Activated CD4-positive, alpha-beta T cell treated with anti-CD3 and anti-CD28 coated beads, Interleukin-2, amount 10 ng/mL, durations not matched to agents 24 days and 14 days (primary cell): ENCODE measurements at regions of chr2 and their contacts with region 1.

Region 1: GRCh38 chr2:151261231-151261976 is at the start of gene RBM43:
- DNase-seq: peak; percentile 97
- H3K4me3 Mint-ChIP-seq: peak within 1 kb of the TSS; percentile 95
- H3K27ac Mint-ChIP-seq: peak within 1 kb of the TSS; percentile 99
- H3K4me1 Mint-ChIP-seq: peaks cover 28% of the 10 kb centered on the region
- H3K27me3 Mint-ChIP-seq: peaks cover 2% of the 10 kb centered on the region
- total RNA-seq, gene RBM43: 2.5 and 3.4 TPM in 2 replicates

Region 2: GRCh38 chr2:151197184-151198108 is 64.0 kb before region 1 on chr2:
- intact Hi-C with region 1: no loop called
- DNase-seq: no peak
- H3K4me3 Mint-ChIP-seq: no peak overlapping the region
- H3K27ac Mint-ChIP-seq: no peak overlapping the region
- H3K4me1 Mint-ChIP-seq: peaks cover 4% of the 10 kb centered on the region
- H3K27me3 Mint-ChIP-seq: peaks cover 6% of the 10 kb centered on the region

Region 3: DNA sequence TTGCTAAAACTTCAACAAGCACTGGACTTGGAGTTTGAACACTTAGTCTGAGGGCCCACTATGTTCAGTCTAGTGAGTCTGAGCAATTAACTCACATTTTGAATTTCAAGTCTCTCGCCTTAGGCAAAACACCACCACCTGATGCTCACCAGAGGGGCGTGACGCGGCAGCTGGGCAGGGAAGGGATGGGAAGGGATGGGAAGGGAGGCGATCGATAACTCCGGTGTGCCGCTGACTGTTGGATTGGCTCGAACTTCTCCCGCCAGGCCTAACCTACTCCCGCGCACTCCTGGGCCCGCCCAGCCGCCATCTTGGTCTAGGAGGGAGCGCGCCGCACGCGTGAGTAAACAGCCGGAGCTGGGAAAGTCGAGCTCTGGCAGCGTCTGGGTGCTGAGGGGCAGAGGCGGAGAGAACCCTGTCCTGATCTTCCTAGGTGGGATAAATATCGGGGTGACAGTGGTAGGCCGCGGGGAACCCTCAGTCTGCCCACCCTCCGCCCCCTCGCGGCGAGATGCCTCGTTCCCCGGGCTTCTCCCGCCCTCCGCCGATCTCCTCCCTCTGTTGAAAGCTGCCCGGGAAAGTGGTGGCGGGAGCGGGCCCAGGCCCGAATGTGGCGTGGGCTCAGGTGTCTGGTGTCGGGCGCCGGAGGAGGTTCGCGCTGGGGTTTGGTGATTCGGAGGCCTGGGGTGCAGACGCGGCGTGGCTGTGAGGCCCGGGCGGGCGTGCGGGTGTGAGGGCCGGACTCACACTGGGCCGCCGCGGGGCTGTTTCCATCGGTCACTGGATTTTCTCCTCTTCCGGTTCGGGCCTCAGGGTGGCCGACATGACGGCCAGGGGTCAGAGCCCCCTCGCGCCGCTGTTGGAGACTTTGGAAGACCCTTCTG is 148.4 kb after region 1 on chr2 and contains the start of gene RIF1:
- intact Hi-C with region 1: loop called (anchors 1 kb)
- DNase-seq: peak; percentile 92
- H3K4me3 Mint-ChIP-seq: peak within 1 kb of the TSS; percentile 99
- H3K27ac Mint-ChIP-seq: peak within 1 kb of the TSS; percentile 95
- H3K4me1 Mint-ChIP-seq: peaks cover 21% of the 10 kb centered on the region
- H3K27me3 Mint-ChIP-seq: peaks cover 5% of the 10 kb centered on the region
- total RNA-seq, gene RIF1: 84.8 and 86.3 TPM in 2 replicates

Region 4: DNA sequence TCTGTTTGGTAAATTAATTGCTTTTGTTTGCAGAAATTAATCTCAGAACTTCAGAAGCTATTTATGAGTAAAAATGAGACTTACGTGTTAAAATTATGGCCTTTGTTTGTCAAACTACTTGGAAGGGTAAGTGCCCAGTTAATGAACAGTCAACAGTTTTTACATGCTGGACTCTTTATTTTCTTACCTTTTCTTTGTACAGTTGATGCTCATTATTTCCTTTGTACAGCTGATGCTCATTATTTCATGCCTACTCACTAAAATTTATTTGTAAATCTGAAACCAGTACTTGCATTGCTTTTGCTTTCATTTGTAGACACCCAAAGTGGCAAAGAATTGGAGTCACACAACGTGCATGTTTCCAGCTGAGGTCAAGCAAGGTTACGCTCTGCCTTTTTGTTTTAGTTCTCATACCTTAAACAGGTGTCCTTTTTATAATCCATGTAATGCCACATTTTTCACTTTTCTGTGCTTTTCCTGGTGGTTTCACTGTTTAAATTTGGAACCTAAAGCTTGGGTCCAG is 161.6 kb after region 1 on chr2:
- intact Hi-C with region 1: loop called (anchors 1 kb)
- DNase-seq: peak; percentile 66
- H3K4me3 Mint-ChIP-seq: peak overlapping the region; percentile 15
- H3K27ac Mint-ChIP-seq: peak overlapping the region; percentile 76
- H3K4me1 Mint-ChIP-seq: peaks cover 35% of the 10 kb centered on the region
- H3K27me3 Mint-ChIP-seq: no peaks in the 10 kb centered on the region

Region 5: GRCh38 chr2:151638191-151638933 is 377.0 kb after region 1 on chr2:
- intact Hi-C with region 1: loop called (anchors 10 kb)
- DNase-seq: peak; percentile 75
- H3K4me3 Mint-ChIP-seq: peak overlapping the region; percentile 79
- H3K27ac Mint-ChIP-seq: peak overlapping the region; percentile 92
- H3K4me1 Mint-ChIP-seq: peaks cover 26% of the 10 kb centered on the region
- H3K27me3 Mint-ChIP-seq: no peaks in the 10 kb centered on the region